ENCODE measurements at regions of chr2 and their contacts with region 1.

Region 1: DNA sequence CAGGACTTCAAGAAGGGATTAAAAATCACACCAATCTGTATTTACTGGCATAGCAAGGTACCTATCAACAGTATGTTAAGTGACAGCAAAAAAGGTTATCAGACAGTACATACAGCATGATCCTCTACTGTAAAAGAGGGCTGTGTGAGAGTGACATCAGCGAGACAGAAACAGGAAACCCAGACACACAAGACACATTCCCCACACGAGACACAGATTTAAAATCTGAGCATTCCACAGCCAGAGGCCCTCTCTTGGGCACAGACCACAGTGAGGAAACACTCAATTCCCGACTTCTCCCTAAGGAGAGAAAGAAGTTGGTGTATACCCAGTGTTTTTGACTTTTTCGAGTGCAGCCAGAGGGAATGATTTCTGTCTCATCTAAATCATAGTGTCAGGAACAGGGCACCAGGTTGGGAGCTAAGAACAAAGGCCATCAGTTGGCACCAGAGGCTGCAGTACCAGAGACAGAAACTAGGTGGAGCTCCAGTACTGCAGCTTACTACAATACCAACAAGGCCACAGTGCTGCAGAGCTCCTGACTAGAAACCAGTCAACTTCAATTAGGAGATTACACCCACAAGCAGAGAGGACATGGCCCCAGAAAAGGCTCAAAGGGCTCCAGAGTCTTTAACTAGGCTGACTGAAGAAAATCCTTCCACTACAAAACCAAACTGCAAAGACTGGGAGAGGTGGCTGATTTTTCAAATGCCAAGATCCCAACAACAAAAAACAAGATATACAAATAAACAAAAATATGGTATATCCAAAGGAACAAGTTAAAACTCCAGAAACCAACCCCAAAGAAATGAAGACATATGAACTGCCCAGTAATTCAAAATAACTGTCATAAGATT is 41.0 kb downstream of the UNC50 start:
- H3K4me3 Mint-ChIP-seq: no peak overlapping the region
- H3K27ac Mint-ChIP-seq: peak overlapping the region; percentile 76
- H3K4me1 Mint-ChIP-seq: peaks cover 31% of the 10 kb centered on the region
- H3K27me3 Mint-ChIP-seq: no peaks in the 10 kb centered on the region

Region 2: DNA sequence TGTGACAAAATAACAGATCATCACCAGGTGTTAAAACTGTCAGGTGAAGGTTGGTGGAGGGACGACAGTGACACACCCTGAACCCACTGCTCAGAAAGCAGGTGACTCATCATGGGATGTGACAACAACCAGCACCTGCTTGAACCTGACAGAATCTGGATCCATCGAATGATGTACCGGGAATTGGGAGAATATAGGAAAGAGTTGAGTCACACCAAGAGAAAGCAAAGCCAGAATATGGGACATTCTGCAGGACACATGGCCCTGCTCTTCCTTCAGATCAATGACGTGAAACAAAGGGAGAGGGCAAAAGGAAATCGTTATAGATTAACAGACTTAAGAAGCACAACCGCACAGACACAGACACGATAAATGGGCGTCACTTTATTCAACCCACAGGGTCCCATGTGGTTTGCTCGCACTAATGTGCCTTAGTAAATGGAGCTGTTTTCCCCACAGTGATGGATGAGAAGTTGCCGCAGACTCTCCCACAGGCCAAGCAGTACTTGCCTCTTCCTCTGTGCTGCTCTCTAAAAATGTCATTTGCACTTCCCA is 186.5 kb after region 1 on chr2:
- intact Hi-C with region 1: loop called (anchors 1 kb)
- H3K4me3 Mint-ChIP-seq: no peak overlapping the region
- H3K27ac Mint-ChIP-seq: peak overlapping the region; percentile 63
- H3K4me1 Mint-ChIP-seq: peaks cover 42% of the 10 kb centered on the region
- H3K27me3 Mint-ChIP-seq: no peaks in the 10 kb centered on the region

Region 3: DNA sequence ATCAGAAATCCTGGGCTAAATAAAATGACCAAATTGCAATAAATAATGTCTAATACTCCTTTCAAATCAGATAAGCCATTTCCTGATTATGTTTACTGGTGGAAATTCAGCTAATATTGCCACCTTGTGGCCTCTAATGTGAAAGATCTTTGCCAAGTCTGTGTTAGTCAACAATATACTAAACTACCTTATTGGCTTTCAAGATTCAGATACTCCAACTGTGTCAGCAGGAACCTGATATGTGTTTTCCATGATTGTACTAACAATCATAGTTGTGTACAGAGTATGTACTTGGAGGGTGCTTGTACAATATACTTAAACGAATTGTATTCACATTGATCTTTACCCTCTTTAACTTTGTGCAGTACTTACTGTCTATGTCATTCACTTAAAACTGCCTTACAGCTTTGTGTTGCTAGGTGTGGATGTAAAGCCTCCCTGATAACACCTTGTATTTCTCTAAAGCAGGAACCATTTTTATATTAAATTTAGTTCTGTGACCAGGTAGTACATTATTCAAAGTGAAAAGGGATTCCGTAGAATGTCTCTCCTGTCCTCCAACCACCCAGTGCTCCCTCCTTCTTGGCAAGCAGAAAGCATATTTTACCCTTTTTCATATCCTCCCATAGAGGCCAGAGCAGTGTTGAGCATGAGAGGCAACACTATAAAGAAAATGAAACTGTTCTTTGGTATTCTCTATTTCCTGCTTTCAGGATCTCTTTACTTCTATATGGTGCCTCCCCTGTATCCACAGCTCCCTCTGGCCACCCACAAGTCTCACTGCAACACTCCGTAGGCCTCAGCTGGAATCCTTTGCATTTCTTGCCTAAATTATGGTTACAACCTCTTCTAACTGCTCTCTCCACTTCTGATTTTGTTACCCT is 417.0 kb after region 1 on chr2:
- intact Hi-C with region 1: loop called (anchors 1 kb)
- H3K4me3 Mint-ChIP-seq: no peak overlapping the region
- H3K27ac Mint-ChIP-seq: no peak overlapping the region
- H3K4me1 Mint-ChIP-seq: no peaks in the 10 kb centered on the region
- H3K27me3 Mint-ChIP-seq: no peaks in the 10 kb centered on the region

Measured in dendritic cell treated with granulocyte-macrophage colony-stimulating factor and Interleukin-4, amounts not matched to agents 40 ng/mL and 50 ng/mL, for 4 days (primary cell).